ENCODE measurements at regions of chr10 and their contacts with region 1.

Region 1: GRCh38 chr10:114876602-114877300 is 55.2 kb downstream of the FHIP2A start:
- DNase-seq: peak; percentile 74
- ATAC-seq: peak; percentile 94
- H3K4me3 ChIP-seq: no peak overlapping the region
- H3K27ac ChIP-seq: no peak overlapping the region
- H3K4me1 ChIP-seq: peaks cover 0 to 13% of the 10 kb centered on the region in 2 experiments; a peak in 1 of 4 replicates
- H3K27me3 ChIP-seq: no peaks in the 10 kb centered on the region
- CTCF ChIP-seq: peak; percentile 95 to 97 (median 96)
- POLR2A ChIP-seq: no peak
- RAD21 ChIP-seq: peak; percentile 96

Region 2: GRCh38 chr10:114801411-114801813 is 75.3 kb before region 1 on chr10:
- CTCF ChIA-PET with region 1: no interaction called
- POLR2A ChIA-PET with region 1: no interaction called
- RAD21 ChIA-PET with region 1: no interaction called
- intact Hi-C with region 1: no loop called
- DNase-seq: no peak
- ATAC-seq: no peak; the same call in 1 of the 2 replicates
- H3K4me3 ChIP-seq: no peak overlapping the region
- H3K27ac ChIP-seq: no peak overlapping the region
- H3K4me1 ChIP-seq: no peaks in the 10 kb centered on the region
- H3K27me3 ChIP-seq: no peaks in the 10 kb centered on the region
- CTCF ChIP-seq: no peak
- POLR2A ChIP-seq: no peak
- RAD21 ChIP-seq: no peak

Region 3: GRCh38 chr10:114862456-114862855 is 14.3 kb before region 1 on chr10:
- CTCF ChIA-PET with region 1: interaction called, 27 read pairs
- POLR2A ChIA-PET with region 1: no interaction called
- RAD21 ChIA-PET with region 1: no interaction called
- intact Hi-C with region 1: no loop called
- DNase-seq: no peak
- ATAC-seq: no peak
- H3K4me3 ChIP-seq: no peak overlapping the region
- H3K27ac ChIP-seq: no peak overlapping the region
- H3K4me1 ChIP-seq: no peaks in the 10 kb centered on the region
- H3K27me3 ChIP-seq: no peaks in the 10 kb centered on the region
- CTCF ChIP-seq: no peak
- POLR2A ChIP-seq: no peak
- RAD21 ChIP-seq: no peak

Region 4: GRCh38 chr10:114893251-114893650 is 16.5 kb after region 1 on chr10:
- CTCF ChIA-PET with region 1: interaction called, 11 read pairs
- POLR2A ChIA-PET with region 1: no interaction called
- RAD21 ChIA-PET with region 1: no interaction called
- intact Hi-C with region 1: no loop called
- DNase-seq: peak; percentile 55
- ATAC-seq: peak; percentile 72
- H3K4me3 ChIP-seq: no peak overlapping the region
- H3K27ac ChIP-seq: no peak overlapping the region
- H3K4me1 ChIP-seq: no peaks in the 10 kb centered on the region
- H3K27me3 ChIP-seq: no peaks in the 10 kb centered on the region
- CTCF ChIP-seq: no peak
- POLR2A ChIP-seq: no peak
- RAD21 ChIP-seq: no peak

Region 5: GRCh38 chr10:115417585-115418265 is 541.0 kb after region 1 on chr10:
- CTCF ChIA-PET with region 1: interaction called, 3 read pairs
- POLR2A ChIA-PET with region 1: no interaction called
- RAD21 ChIA-PET with region 1: no interaction called
- intact Hi-C with region 1: loop called (anchors 1 kb)
- DNase-seq: peak; percentile 66
- ATAC-seq: peak; percentile 100
- H3K4me3 ChIP-seq: no peak overlapping the region
- H3K27ac ChIP-seq: no peak overlapping the region
- H3K4me1 ChIP-seq: no peaks in the 10 kb centered on the region
- H3K27me3 ChIP-seq: peaks cover 16% of the 10 kb centered on the region; the same call in 1 of the 2 replicates
- CTCF ChIP-seq: peak; percentile 85 to 95 (median 93)
- POLR2A ChIP-seq: no peak
- RAD21 ChIP-seq: peak; percentile 92